Activated CD8-positive, alpha-beta T cell treated with anti-CD3 and anti-CD28 coated beads, Interleukin-2, amount 10 ng/mL, durations not matched to agents 7 days and 5 days (primary cell): ENCODE measurements at regions of chr10 and their contacts with region 1.

Region 1: DNA sequence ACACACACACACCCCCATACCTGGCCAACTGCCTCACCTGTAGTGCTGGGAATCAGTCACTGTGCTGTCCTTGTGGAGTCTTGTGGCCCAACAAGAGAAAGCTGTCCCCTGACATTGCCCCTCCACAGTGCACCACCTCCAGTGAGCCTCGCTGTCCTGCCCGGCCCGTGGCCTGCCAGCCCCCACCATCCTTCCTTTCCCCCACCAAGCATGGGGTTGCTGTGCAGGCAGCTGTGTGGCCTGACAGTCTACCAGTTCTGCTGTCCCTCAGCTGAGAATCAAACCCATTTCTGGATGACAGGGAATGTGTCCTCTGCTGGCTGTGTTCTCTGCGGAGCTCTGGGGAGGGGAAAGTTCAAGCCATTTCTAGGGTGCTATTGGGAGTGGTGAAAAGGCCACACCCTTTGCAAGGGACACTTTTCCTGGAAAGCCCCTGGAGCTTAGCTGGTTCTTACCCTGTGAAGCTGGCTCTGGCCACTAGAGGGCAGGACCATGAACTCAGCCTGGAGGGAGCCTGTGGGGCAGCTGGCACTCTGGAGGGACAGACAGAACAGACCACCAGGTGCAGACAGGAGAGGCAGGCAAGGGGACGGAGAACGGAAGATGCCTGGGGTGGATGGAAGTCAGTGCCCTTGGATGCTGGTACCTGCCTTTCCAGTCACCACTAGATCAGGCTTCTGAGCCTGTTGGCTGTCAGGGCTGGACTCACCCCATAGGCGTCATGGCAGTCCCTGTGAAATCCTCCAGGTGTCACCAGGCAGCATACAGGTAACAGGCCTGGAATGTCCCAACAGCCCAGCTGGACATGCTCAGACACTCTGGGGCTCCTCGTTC is 10.5 kb upstream of the MTPAP start:
- DNase-seq: peak; percentile 75
- ATAC-seq: peak; percentile 92
- H3K4me3 Mint-ChIP-seq: no peak overlapping the region
- H3K27ac Mint-ChIP-seq: no peak overlapping the region
- H3K4me1 Mint-ChIP-seq: peaks cover 7% of the 10 kb centered on the region
- H3K27me3 Mint-ChIP-seq: peaks cover 12% of the 10 kb centered on the region

Region 2: DNA sequence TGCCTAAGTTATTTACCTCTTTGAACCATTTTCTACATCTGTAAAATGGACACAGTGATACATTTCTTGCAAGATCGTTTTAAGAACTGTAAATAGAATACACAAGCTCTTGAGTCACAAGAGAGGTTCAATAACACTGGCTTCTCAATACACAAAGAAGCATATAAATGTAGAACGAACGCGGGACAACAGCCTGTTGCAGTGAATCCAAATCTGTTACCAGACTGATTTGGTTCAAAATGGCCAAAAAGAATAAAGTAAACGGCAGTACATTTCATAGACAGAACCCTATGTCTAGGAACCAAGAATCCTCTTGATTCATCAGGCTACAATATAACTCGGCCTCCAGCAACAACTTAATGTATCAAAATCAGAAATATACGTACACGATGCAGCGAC is 11.2 kb before region 1 on chr10:
- CTCF ChIA-PET with region 1: interaction called, 61 read pairs
- POLR2A ChIA-PET with region 1: no interaction called
- DNase-seq: no peak
- ATAC-seq: no peak
- H3K4me3 Mint-ChIP-seq: peak overlapping the region; percentile 87
- H3K27ac Mint-ChIP-seq: peak overlapping the region; percentile 90
- H3K4me1 Mint-ChIP-seq: peaks cover 27% of the 10 kb centered on the region
- H3K27me3 Mint-ChIP-seq: peaks cover 1% of the 10 kb centered on the region

Region 3: GRCh38 chr10:30374353-30374752 is 14.8 kb after region 1 on chr10:
- CTCF ChIA-PET with region 1: interaction called, 15 read pairs
- POLR2A ChIA-PET with region 1: no interaction called
- DNase-seq: no peak
- ATAC-seq: no peak
- H3K4me3 Mint-ChIP-seq: no peak overlapping the region
- H3K27ac Mint-ChIP-seq: no peak overlapping the region
- H3K4me1 Mint-ChIP-seq: peaks cover 27% of the 10 kb centered on the region
- H3K27me3 Mint-ChIP-seq: peaks cover 22% of the 10 kb centered on the region

Region 4: GRCh38 chr10:30384701-30385201 is 25.2 kb after region 1 on chr10:
- CTCF ChIA-PET with region 1: interaction called, 39 read pairs
- POLR2A ChIA-PET with region 1: no interaction called
- DNase-seq: peak; percentile 37
- ATAC-seq: no peak
- H3K4me3 Mint-ChIP-seq: no peak overlapping the region
- H3K27ac Mint-ChIP-seq: no peak overlapping the region
- H3K4me1 Mint-ChIP-seq: no peaks in the 10 kb centered on the region
- H3K27me3 Mint-ChIP-seq: peaks cover 26% of the 10 kb centered on the region

Region 5: GRCh38 chr10:30392564-30392990 is 33.0 kb after region 1 on chr10:
- CTCF ChIA-PET with region 1: interaction called, 14 read pairs
- POLR2A ChIA-PET with region 1: no interaction called
- DNase-seq: peak; percentile 84
- ATAC-seq: peak; percentile 100
- H3K4me3 Mint-ChIP-seq: peak overlapping the region; percentile 35
- H3K27ac Mint-ChIP-seq: peak overlapping the region; percentile 54
- H3K4me1 Mint-ChIP-seq: peaks cover 16% of the 10 kb centered on the region
- H3K27me3 Mint-ChIP-seq: peaks cover 29% of the 10 kb centered on the region